CD4-positive, alpha-beta memory T cell (primary cell): ENCODE measurements at regions of chr1 and their contacts with region 1.

Region 1: GRCh38 chr1:153510984-153511410 is 24.8 kb downstream of the S100A6 start:
- DNase-seq: peak; percentile 67 to 72 (median 69)
- H3K4me3 ChIP-seq: no peak overlapping the region
- H3K4me3 Mint-ChIP-seq: no peak overlapping the region
- H3K27ac ChIP-seq: no peak overlapping the region
- H3K27ac Mint-ChIP-seq: peak overlapping the region in 3 of 7 donors; percentile 30 to 49 (median 32)
- H3K4me1 ChIP-seq: peaks cover 8% of the 10 kb centered on the region
- H3K4me1 Mint-ChIP-seq: peaks cover 3 to 8% (median 5%) of the 10 kb centered on the region in 4 donors
- H3K27me3 ChIP-seq: no peaks in the 10 kb centered on the region
- H3K27me3 Mint-ChIP-seq: no peaks in the 10 kb centered on the region

Region 2: GRCh38 chr1:153526132-153526543 is 15.1 kb after region 1 on chr1:
- CTCF ChIA-PET with region 1: interaction called, 74 read pairs
- POLR2A ChIA-PET with region 1: interaction called, 29 read pairs
- intact Hi-C with region 1: no loop called
- DNase-seq: no peak
- H3K4me3 ChIP-seq: no peak overlapping the region
- H3K4me3 Mint-ChIP-seq: no peak overlapping the region
- H3K27ac ChIP-seq: no peak overlapping the region
- H3K27ac Mint-ChIP-seq: peak overlapping the region in 1 of 7 donors; percentile 60
- H3K4me1 ChIP-seq: peaks cover 7% of the 10 kb centered on the region
- H3K4me1 Mint-ChIP-seq: peaks cover 4 to 14% (median 10%) of the 10 kb centered on the region in 4 donors
- H3K27me3 ChIP-seq: no peaks in the 10 kb centered on the region
- H3K27me3 Mint-ChIP-seq: no peaks in the 10 kb centered on the region

Region 3: GRCh38 chr1:153545067-153546055 is 34.4 kb after region 1 on chr1 and contains the start of gene S100A4:
- CTCF ChIA-PET with region 1: interaction called, 37 read pairs
- POLR2A ChIA-PET with region 1: interaction called, 6 read pairs
- intact Hi-C with region 1: no loop called
- DNase-seq: peak; percentile 84 to 92 (median 89)
- H3K4me3 ChIP-seq: peak within 1 kb of the TSS; percentile 71 to 79
- H3K4me3 Mint-ChIP-seq: peak within 1 kb of the TSS; percentile 96 to 99 (median 98)
- H3K27ac ChIP-seq: peak within 1 kb of the TSS; percentile 74
- H3K27ac Mint-ChIP-seq: peak within 1 kb of the TSS; percentile 93 to 98 (median 97)
- H3K4me1 ChIP-seq: peaks cover 70% of the 10 kb centered on the region
- H3K4me1 Mint-ChIP-seq: peaks cover 49 to 81% (median 68%) of the 10 kb centered on the region in 4 donors
- H3K27me3 ChIP-seq: no peaks in the 10 kb centered on the region
- H3K27me3 Mint-ChIP-seq: no peaks in the 10 kb centered on the region
- total RNA-seq, gene S100A4: 329 to 346 TPM

Region 4: GRCh38 chr1:153572569-153573015 is 61.6 kb after region 1 on chr1:
- CTCF ChIA-PET with region 1: interaction called, 243 read pairs
- POLR2A ChIA-PET with region 1: interaction called, 13 read pairs
- intact Hi-C with region 1: loop called (anchors 1 kb)
- DNase-seq: peak in 4 of 5 donors; percentile 24 to 45 (median 30)
- H3K4me3 ChIP-seq: no peak overlapping the region
- H3K4me3 Mint-ChIP-seq: no peak overlapping the region
- H3K27ac ChIP-seq: no peak overlapping the region
- H3K27ac Mint-ChIP-seq: peak overlapping the region in 3 of 7 donors; percentile 15 to 41 (median 27)
- H3K4me1 ChIP-seq: peaks cover 14% of the 10 kb centered on the region
- H3K4me1 Mint-ChIP-seq: peaks cover 9 to 27% (median 12%) of the 10 kb centered on the region in 4 donors
- H3K27me3 ChIP-seq: no peaks in the 10 kb centered on the region
- H3K27me3 Mint-ChIP-seq: peaks cover 0 to 5% of the 10 kb centered on the region in 2 donors

Region 5: DNA sequence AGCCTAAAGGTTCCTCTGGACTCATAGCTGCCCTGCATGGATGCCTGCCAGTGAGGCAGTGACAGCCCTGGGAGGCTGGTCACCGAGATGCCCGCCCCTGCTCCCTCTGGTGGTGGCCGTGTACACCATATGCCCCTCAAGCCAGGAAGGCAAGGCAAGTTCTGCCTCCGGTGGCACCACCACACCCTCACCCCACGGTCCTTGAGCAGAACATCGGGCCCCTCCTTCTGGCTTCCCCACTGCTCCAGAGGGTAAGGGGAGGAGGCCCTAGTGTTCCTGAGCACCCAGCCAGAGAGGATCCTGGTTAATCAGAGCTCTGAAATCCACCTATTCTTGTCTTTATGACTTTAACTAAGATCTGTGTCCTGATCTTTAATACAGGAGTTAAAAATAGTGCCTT is 106.7 kb after region 1 on chr1:
- CTCF ChIA-PET with region 1: interaction called, 142 read pairs
- POLR2A ChIA-PET with region 1: no interaction called
- intact Hi-C with region 1: loop called (anchors 1 kb)
- DNase-seq: peak in 3 of 5 donors; percentile 50 to 63 (median 55)
- H3K4me3 ChIP-seq: no peak overlapping the region
- H3K4me3 Mint-ChIP-seq: no peak overlapping the region
- H3K27ac ChIP-seq: no peak overlapping the region
- H3K27ac Mint-ChIP-seq: peak overlapping the region in 1 of 7 donors; percentile 4
- H3K4me1 ChIP-seq: no peaks in the 10 kb centered on the region
- H3K4me1 Mint-ChIP-seq: peaks cover 0 to 5% (median 0%) of the 10 kb centered on the region in 4 donors
- H3K27me3 ChIP-seq: no peaks in the 10 kb centered on the region
- H3K27me3 Mint-ChIP-seq: peaks cover 0 to 1% of the 10 kb centered on the region in 2 donors

Region 6: DNA sequence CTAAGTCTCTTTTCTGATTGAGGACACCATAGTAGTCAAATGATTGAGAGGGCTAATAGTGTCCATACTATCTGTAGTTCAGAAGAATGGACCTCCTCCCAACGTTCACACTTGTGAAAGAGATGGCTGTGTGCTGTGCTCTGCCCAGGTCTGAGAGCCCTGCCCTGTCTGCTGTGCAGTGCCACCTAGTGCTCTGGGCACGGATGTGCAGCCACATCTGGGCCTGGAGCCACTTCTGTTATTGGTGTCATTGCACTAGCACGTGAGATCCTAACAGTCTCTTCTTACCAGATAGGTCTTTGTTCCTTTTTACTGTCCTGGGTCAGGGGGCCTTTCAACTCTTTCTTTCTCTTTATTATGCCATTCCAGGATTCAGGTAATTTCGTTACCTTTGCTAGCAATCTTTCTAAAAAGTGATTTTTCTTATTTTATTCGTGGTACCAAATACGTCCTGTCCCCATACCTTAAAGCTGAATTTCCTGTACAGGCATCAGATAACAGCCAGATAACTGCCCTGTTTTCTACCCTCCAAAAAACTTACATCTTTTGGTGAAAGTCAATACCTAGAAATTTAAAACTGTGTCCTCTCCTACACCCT is 238.5 kb after region 1 on chr1:
- CTCF ChIA-PET with region 1: interaction called, 5 read pairs
- POLR2A ChIA-PET with region 1: no interaction called
- intact Hi-C with region 1: loop called (anchors 1 kb)
- DNase-seq: peak; percentile 73 to 78 (median 77)
- H3K4me3 ChIP-seq: no peak overlapping the region
- H3K4me3 Mint-ChIP-seq: no peak overlapping the region
- H3K27ac ChIP-seq: no peak overlapping the region
- H3K27ac Mint-ChIP-seq: peak overlapping the region in 3 of 7 donors; percentile 6 to 73 (median 70)
- H3K4me1 ChIP-seq: no peaks in the 10 kb centered on the region
- H3K4me1 Mint-ChIP-seq: peaks cover 0 to 8% (median 5%) of the 10 kb centered on the region in 4 donors
- H3K27me3 ChIP-seq: no peaks in the 10 kb centered on the region
- H3K27me3 Mint-ChIP-seq: no peaks in the 10 kb centered on the region

Region 7: DNA sequence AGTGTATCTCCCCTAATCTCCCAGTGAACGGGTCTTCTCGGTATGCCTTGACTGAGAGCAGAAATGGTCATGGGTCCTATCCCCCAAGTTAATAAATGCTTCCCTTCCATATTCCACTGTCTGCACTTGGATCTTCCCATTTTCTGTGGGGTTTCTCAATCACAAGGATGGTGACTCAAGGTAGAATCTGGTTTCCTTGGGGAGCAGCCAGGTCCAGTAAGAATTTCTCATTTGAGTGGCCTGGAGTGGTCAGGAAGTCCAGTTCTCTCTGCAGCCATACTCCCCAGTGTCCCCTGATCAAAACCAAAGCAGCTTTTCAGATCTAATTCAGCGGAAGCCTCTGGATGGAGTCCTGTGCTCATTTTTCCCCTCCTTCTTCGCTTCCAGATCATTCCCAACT is 249.4 kb after region 1 on chr1:
- CTCF ChIA-PET with region 1: no interaction called
- POLR2A ChIA-PET with region 1: no interaction called
- intact Hi-C with region 1: no loop called
- DNase-seq: no peak
- H3K4me3 ChIP-seq: no peak overlapping the region
- H3K4me3 Mint-ChIP-seq: no peak overlapping the region
- H3K27ac ChIP-seq: no peak overlapping the region
- H3K27ac Mint-ChIP-seq: peak overlapping the region in 1 of 7 donors; percentile 4
- H3K4me1 ChIP-seq: no peaks in the 10 kb centered on the region
- H3K4me1 Mint-ChIP-seq: peaks cover 0 to 1% (median 0%) of the 10 kb centered on the region in 4 donors
- H3K27me3 ChIP-seq: no peaks in the 10 kb centered on the region
- H3K27me3 Mint-ChIP-seq: no peaks in the 10 kb centered on the region